ENCODE measurements at regions of chr21 and their contacts with region 1.

Region 1: DNA sequence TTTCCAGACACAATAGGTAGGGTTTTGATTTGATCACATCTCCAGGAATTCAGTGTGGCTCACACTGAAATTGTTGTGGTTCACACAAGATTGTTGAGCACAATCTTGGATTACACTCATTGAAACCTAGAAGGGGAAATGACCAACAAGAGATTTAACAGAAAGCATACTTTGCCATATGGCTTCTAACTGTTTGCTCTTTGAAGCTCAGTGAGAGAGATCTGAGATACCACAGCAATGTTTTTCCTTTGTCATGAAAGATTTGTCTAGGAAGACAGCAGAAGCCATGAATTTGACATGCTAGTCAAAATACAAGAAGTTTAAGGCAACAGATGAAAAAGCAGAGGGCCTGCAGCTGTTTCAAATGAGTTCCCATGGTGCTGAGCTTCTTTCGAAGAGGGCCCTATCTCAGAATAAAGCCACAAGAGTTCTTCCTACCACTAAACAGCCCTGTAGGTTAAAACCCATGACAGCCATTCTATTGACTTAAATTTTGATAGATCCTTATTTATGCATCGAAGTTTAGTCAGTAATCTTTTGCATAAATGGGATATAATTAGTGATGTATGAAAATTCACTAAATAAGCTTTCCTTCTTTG is 650.4 kb downstream of the LTN1 start:
- DNase-seq: no peak
- H3K4me3 ChIP-seq: no peak overlapping the region
- H3K27ac ChIP-seq: no peak overlapping the region
- H3K4me1 ChIP-seq: no peaks in the 10 kb centered on the region
- H3K27me3 ChIP-seq: no peaks in the 10 kb centered on the region
- CTCF ChIP-seq: no peak

Region 2: GRCh38 chr21:28396421-28396820 is 54.1 kb after region 1 on chr21:
- CTCF ChIA-PET with region 1: no interaction called
- dilution Hi-C with region 1: loop called (anchors 5 kb)
- in situ Hi-C with region 1: no loop called
- intact Hi-C with region 1: no loop called
- DNase-seq: peak; percentile 64
- H3K4me3 ChIP-seq: no peak overlapping the region
- H3K27ac ChIP-seq: no peak overlapping the region
- H3K4me1 ChIP-seq: peaks cover 14% of the 10 kb centered on the region
- H3K27me3 ChIP-seq: no peaks in the 10 kb centered on the region
- CTCF ChIP-seq: no peak